ENCODE measurements at regions of chr10 and their contacts with region 1.

Region 1: GRCh38 chr10:3852147-3852904 is 67.3 kb upstream of the KLF6 start:
- DNase-seq: peak; percentile 86
- H3K4me3 Mint-ChIP-seq: peak overlapping the region; percentile 36
- H3K27ac Mint-ChIP-seq: peak overlapping the region; percentile 92
- H3K4me1 Mint-ChIP-seq: peaks cover 53% of the 10 kb centered on the region
- H3K27me3 Mint-ChIP-seq: no peaks in the 10 kb centered on the region

Region 2: GRCh38 chr10:3749600-3749999 is 102.7 kb before region 1 on chr10:
- CTCF ChIA-PET with region 1: no interaction called
- POLR2A ChIA-PET with region 1: no interaction called
- intact Hi-C with region 1: no loop called
- DNase-seq: no peak
- H3K4me3 Mint-ChIP-seq: no peak overlapping the region
- H3K27ac Mint-ChIP-seq: no peak overlapping the region
- H3K4me1 Mint-ChIP-seq: peaks cover 7% of the 10 kb centered on the region
- H3K27me3 Mint-ChIP-seq: no peaks in the 10 kb centered on the region

Region 3: GRCh38 chr10:3776796-3777571 is 75.3 kb before region 1 on chr10:
- CTCF ChIA-PET with region 1: interaction called, 4 read pairs
- POLR2A ChIA-PET with region 1: interaction called, 103 read pairs
- intact Hi-C with region 1: loop called (anchors 1 kb)
- DNase-seq: peak; percentile 70
- H3K4me3 Mint-ChIP-seq: peak overlapping the region; percentile 67
- H3K27ac Mint-ChIP-seq: peak overlapping the region; percentile 83
- H3K4me1 Mint-ChIP-seq: peaks cover 77% of the 10 kb centered on the region
- H3K27me3 Mint-ChIP-seq: no peaks in the 10 kb centered on the region

Region 4: GRCh38 chr10:3828404-3829155 is 23.7 kb before region 1 on chr10:
- CTCF ChIA-PET with region 1: interaction called, 4 read pairs
- POLR2A ChIA-PET with region 1: interaction called, 31 read pairs
- intact Hi-C with region 1: loop called (anchors 1 kb)
- DNase-seq: peak; percentile 70
- H3K4me3 Mint-ChIP-seq: peak overlapping the region; percentile 56
- H3K27ac Mint-ChIP-seq: peak overlapping the region; percentile 97
- H3K4me1 Mint-ChIP-seq: peaks cover 63% of the 10 kb centered on the region
- H3K27me3 Mint-ChIP-seq: no peaks in the 10 kb centered on the region

Region 5: DNA sequence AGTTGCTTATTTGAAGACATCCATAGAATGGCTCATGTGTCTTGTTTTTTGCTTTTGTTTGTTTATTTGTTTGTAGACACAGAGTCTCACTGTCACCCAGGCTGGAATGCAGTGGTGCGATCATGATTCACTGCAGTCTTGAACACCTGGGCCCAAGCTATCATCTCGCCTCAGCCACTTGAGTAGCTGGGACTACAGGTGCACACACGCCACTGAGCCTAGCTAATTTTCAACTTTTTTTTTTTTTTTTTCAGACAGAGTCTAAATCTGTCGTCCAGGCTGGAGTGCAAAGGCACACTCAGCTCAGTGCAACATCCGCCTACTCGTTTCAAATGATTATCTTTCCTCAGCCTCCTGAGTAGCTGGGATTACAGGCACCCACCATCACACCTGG is 15.9 kb after region 1 on chr10:
- CTCF ChIA-PET with region 1: interaction called, 12 read pairs
- POLR2A ChIA-PET with region 1: interaction called, 96 read pairs
- intact Hi-C with region 1: loop called (anchors 1 kb)
- DNase-seq: no peak
- H3K4me3 Mint-ChIP-seq: no peak overlapping the region
- H3K27ac Mint-ChIP-seq: peak overlapping the region; percentile 93
- H3K4me1 Mint-ChIP-seq: peaks cover 76% of the 10 kb centered on the region
- H3K27me3 Mint-ChIP-seq: no peaks in the 10 kb centered on the region

Region 6: GRCh38 chr10:3887885-3888476 is 35.7 kb after region 1 on chr10:
- CTCF ChIA-PET with region 1: no interaction called
- POLR2A ChIA-PET with region 1: interaction called, 11 read pairs
- intact Hi-C with region 1: loop called (anchors 1 kb)
- DNase-seq: peak; percentile 87
- H3K4me3 Mint-ChIP-seq: peak overlapping the region; percentile 58
- H3K27ac Mint-ChIP-seq: peak overlapping the region; percentile 96
- H3K4me1 Mint-ChIP-seq: peaks cover 68% of the 10 kb centered on the region
- H3K27me3 Mint-ChIP-seq: no peaks in the 10 kb centered on the region

Region 7: DNA sequence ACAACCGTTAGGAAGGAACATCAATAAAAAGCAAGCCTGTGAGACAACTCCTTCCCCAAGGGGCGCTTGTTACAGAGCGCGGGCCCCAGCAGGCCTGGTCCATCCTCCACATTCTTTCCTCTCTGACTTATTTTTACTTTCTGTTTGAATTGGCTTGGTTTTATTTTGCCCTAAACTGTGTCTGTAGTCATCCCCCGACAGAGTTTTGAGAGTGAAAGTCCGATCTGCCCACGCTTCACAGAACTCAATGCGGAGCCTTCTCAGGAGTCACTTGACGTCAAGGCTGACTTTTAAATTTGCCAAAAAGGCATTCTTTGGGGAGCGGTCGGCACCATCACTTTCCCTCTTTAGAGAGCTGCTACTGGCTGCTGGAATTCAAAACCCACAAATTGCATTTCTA is 82.8 kb after region 1 on chr10:
- CTCF ChIA-PET with region 1: no interaction called
- POLR2A ChIA-PET with region 1: interaction called, 6 read pairs
- intact Hi-C with region 1: loop called (anchors 1 kb)
- DNase-seq: peak; percentile 95
- H3K4me3 Mint-ChIP-seq: peak overlapping the region; percentile 42
- H3K27ac Mint-ChIP-seq: peak overlapping the region; percentile 92
- H3K4me1 Mint-ChIP-seq: peaks cover 49% of the 10 kb centered on the region
- H3K27me3 Mint-ChIP-seq: no peaks in the 10 kb centered on the region

Region 8: DNA sequence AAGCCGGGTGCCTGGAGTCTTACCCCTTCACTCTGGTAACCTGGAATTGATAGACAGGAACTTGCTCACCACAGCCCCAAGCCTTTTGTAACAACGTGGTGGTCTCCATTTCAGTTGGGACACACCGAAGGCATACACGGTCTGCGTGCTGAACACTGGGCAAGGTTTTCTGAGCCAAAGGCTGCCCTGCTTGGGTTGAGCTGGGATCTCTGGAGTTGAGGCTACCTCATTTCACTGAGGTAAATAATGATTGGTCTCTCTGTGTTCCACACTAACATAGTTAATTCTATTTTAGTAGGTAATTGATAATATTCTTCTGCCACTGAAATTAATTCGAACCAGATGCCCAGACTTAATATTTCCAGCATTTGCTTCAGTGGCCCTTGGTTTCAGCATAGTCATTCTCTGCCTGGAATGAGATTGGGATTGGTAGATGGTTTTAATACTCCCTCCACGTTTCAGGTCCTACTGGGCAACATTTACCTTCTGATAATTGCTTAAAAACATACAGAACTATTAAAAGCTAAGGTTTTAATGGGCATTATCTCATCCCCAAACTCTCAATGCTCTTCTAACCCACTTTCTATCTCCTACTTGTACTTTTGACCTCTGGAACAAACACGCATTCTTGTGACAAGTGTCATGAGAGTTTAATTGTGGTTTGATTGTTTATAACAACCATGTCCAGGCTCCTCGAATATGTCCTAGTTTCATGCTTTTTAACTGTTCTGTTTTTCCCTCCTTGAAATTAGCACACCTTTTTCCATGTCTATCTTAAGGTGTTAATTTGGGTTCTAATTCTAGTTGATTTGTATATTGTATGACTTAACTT is 135.0 kb after region 1 on chr10:
- CTCF ChIA-PET with region 1: no interaction called
- POLR2A ChIA-PET with region 1: no interaction called
- intact Hi-C with region 1: no loop called
- DNase-seq: no peak
- H3K4me3 Mint-ChIP-seq: no peak overlapping the region
- H3K27ac Mint-ChIP-seq: no peak overlapping the region
- H3K4me1 Mint-ChIP-seq: peaks cover 9% of the 10 kb centered on the region
- H3K27me3 Mint-ChIP-seq: no peaks in the 10 kb centered on the region

Measured in activated CD4-positive, alpha-beta memory T cell treated with anti-CD3 and anti-CD28 coated beads for 36 hours (primary cell).